ENCODE measurements at regions of chr5 and their contacts with region 1.

Region 1: GRCh38 chr5:96336351-96336985 is 96.6 kb downstream of the PCSK1 start:
- DNase-seq: no peak
- H3K4me3 ChIP-seq: peak overlapping the region in 1 of 4 donors; percentile 33
- H3K27ac ChIP-seq: peak overlapping the region in 3 of 4 donors; percentile 15 to 71 (median 63)
- H3K4me1 ChIP-seq: peaks cover 7 to 73% (median 23%) of the 10 kb centered on the region in 3 donors
- H3K27me3 ChIP-seq: no peaks in the 10 kb centered on the region
- CTCF ChIP-seq: peak; percentile 46 to 94 (median 85)
- POLR2A ChIP-seq: no peak

Region 2: GRCh38 chr5:95858661-95859326 is 477.7 kb before region 1 on chr5:
- intact Hi-C with region 1: loop called (anchors 5 kb)
- DNase-seq: peak; percentile 41
- H3K4me3 ChIP-seq: peak overlapping the region in 3 of 4 donors; percentile 28 to 58 (median 34)
- H3K27ac ChIP-seq: peak overlapping the region; percentile 78 to 95 (median 94)
- H3K4me1 ChIP-seq: peaks cover 20 to 77% (median 60%) of the 10 kb centered on the region in 3 donors
- H3K27me3 ChIP-seq: no peaks in the 10 kb centered on the region
- CTCF ChIP-seq: peak; percentile 90 to 99 (median 98)
- POLR2A ChIP-seq: peak in 1 of 4 donors; percentile 44

Region 3: GRCh38 chr5:95961617-95962474 is 374.6 kb before region 1 on chr5 and contains the start of gene ELL2:
- intact Hi-C with region 1: loop called (anchors 5 kb)
- DNase-seq: peak; percentile 99
- H3K4me3 ChIP-seq: peak within 1 kb of the TSS; percentile 58 to 99 (median 89)
- H3K27ac ChIP-seq: peak within 1 kb of the TSS; percentile 98 to 100 (median 99)
- H3K4me1 ChIP-seq: peaks cover 16 to 63% (median 21%) of the 10 kb centered on the region in 3 donors
- H3K27me3 ChIP-seq: no peaks in the 10 kb centered on the region
- CTCF ChIP-seq: no peak
- POLR2A ChIP-seq: peak in 3 of 4 donors; percentile 21 to 94 (median 94)
- total RNA-seq, gene ELL2: 74.9 to 124 (median 121) TPM

Measured in esophagus squamous epithelium (tissue), 5 donors.